ENCODE measurements at regions of chr19 and their contacts with region 1.

Region 1: DNA sequence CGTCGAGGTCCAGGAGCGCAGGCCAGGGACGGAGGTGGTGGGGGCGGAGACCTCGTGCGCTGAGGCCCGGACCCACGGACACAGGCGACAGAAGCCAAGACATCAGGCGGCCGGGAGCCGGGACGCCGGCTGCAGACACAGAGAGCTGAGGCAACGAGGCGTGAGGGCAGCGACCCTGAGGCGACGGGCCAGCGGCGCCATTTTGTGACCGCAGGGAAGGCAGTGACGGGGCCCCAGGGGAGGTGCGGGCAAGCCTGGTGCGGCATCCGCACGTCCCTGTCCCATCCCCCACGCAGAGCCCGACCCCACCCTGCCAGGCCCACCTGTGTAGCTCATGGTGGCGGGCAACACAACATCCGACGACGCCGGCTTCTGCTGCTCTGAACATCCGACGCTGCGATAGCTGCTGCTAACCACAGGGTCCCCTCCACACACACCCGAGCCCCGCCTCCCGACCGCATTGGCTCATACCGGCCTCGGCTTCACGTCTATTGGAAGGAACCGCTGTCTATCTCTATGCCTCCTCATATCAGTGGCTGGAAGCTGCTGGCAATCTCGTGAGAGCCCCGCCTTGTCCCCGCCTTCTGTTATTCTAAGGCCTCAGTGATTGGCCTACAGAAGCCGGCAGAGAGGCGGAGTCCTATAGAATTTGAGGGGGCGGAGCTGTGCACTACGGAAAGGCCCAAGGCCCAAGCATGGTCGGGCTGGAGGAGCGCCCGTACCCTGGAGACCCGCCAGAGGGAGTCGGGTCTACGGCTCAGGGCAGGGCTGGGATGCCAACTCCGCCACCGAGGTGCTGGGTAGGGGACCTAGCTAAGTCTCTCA is at the start of gene AKAP8L:
- DNase-seq: peak; percentile 97 to 100 (median 99)
- H3K4me3 ChIP-seq: peak within 1 kb of the TSS; percentile 77
- H3K4me3 Mint-ChIP-seq: peak within 1 kb of the TSS; percentile 94 to 100 (median 98)
- H3K27ac ChIP-seq: peak within 1 kb of the TSS; percentile 81
- H3K27ac Mint-ChIP-seq: peak within 1 kb of the TSS; percentile 87 to 99 (median 98)
- H3K4me1 ChIP-seq: peaks cover 41% of the 10 kb centered on the region
- H3K4me1 Mint-ChIP-seq: peaks cover 36 to 51% (median 48%) of the 10 kb centered on the region in 3 donors
- H3K27me3 ChIP-seq: no peaks in the 10 kb centered on the region
- H3K27me3 Mint-ChIP-seq: peaks cover 0 to 3% of the 10 kb centered on the region in 2 donors
- total RNA-seq, gene AKAP8L: 74.5 to 74.9 TPM

Region 2: DNA sequence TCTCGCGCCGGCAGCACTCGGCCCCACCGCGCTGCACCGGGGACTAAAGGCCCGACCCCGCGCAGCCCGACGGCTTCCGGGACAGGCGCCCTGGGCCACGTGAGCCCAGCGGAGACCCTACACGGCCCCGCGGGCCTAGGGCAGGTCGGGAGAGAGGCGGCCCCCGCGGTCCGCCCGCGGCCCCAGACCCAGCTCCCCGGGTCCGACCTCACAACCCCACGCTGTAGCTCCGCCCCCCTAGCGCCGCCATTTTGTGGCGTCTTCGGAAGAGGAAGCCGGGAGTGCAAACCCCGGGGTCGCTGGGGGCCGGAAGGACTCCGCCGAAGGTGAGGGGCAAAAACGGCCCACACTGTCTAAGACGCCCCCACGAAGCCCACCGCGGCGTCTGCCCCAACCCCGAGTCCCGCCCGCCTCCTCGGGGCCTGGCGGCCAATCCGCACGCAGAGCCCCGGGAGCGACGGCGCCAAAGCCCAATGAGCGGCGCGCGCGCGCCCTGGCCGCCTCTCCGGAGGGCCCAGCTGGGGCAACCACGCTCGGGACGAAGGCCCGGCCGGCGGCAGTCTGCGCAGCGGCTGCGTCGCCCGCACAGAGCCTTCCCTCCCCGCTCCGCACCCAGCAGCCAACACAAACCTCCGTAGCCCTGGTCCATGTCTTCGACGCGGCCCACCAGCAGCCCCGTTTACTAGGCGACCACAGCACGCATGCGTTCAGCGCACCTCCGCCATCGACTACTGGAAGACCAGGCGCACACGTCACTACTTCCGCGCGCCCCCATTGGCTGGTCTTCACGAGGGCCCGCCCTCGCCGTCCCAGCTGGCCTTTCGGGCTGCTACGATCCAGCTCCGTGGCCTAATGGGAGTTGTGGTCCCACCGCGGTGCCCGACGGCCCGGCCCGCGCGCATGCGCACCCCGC is 39.5 kb before region 1 on chr19 and contains the start of gene AKAP8:
- CTCF ChIA-PET with region 1: interaction called, 34 read pairs
- POLR2A ChIA-PET with region 1: interaction called, 61 read pairs
- DNase-seq: peak; percentile 96 to 99 (median 98)
- H3K4me3 ChIP-seq: peak within 1 kb of the TSS; percentile 100
- H3K4me3 Mint-ChIP-seq: peak within 1 kb of the TSS; percentile 92 to 100 (median 100)
- H3K27ac ChIP-seq: peak within 1 kb of the TSS; percentile 97
- H3K27ac Mint-ChIP-seq: peak within 1 kb of the TSS; percentile 86 to 100 (median 100)
- H3K4me1 ChIP-seq: peaks cover 28% of the 10 kb centered on the region
- H3K4me1 Mint-ChIP-seq: peaks cover 29 to 49% (median 40%) of the 10 kb centered on the region in 3 donors
- H3K27me3 ChIP-seq: no peaks in the 10 kb centered on the region
- H3K27me3 Mint-ChIP-seq: peaks cover 0 to 1% of the 10 kb centered on the region in 2 donors
- total RNA-seq, gene AKAP8: 48.6 to 59.8 TPM

Region 3: DNA sequence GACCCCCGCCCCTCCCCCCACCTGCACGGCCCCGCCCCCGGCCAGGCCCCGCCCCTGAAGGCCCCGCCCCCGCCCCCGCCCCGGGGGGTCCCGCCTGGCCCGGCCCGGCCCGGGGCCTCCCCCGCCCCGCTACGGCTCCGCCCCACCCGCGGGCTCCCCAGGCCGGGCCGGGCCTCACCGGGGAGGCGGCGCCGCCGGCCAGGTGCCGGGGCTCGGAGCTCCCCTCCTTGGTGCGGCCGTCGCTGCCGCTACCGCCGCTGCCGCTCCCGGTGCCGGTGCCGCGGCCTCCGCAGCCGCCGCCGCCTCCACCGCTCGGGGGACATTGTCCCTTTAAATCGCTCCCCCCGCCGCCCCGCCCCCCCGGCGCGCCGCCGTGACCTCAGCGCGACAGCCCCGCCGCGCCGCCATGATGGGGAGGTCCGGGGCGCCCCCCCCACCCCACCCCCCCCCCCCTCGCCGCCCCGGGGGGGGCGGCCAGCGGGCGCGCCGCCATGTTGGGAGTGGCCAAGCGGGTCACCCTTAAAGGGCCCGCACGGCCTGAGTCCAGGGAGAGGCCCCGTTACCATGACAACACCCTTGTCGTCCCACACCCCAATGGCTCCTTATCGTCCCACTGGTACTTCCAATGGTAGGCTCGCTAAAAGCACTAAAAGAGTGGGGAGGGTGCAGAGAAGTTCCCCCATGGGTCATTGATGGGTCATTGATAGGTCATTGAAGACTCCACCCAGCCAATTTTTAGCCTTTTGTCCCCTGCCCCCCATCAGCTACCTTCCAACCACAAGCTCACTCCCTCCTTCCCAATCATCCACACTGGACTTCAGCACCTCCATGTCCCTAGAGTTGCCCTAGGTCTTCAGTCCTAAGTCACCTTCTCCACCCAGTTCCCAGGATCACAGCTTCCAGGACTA is 31.1 kb after region 1 on chr19 and contains the start of gene WIZ:
- CTCF ChIA-PET with region 1: interaction called, 20 read pairs
- POLR2A ChIA-PET with region 1: interaction called, 6 read pairs
- DNase-seq: peak; percentile 76 to 89 (median 85)
- H3K4me3 ChIP-seq: peak within 1 kb of the TSS; percentile 23
- H3K4me3 Mint-ChIP-seq: peak within 1 kb of the TSS; percentile 79 to 94 (median 82)
- H3K27ac ChIP-seq: peak within 1 kb of the TSS; percentile 27
- H3K27ac Mint-ChIP-seq: peak within 1 kb of the TSS; percentile 90 to 98 (median 96)
- H3K4me1 ChIP-seq: peaks cover 6% of the 10 kb centered on the region
- H3K4me1 Mint-ChIP-seq: peaks cover 25 to 37% (median 28%) of the 10 kb centered on the region in 3 donors
- H3K27me3 ChIP-seq: no peaks in the 10 kb centered on the region
- H3K27me3 Mint-ChIP-seq: peaks cover 0 to 8% of the 10 kb centered on the region in 2 donors
- total RNA-seq, gene WIZ: 28.9 to 31.2 TPM

Region 4: GRCh38 chr19:15544283-15544682 is 125.5 kb after region 1 on chr19:
- CTCF ChIA-PET with region 1: interaction called, 183 read pairs
- POLR2A ChIA-PET with region 1: no interaction called
- DNase-seq: no peak
- H3K4me3 ChIP-seq: no peak overlapping the region
- H3K4me3 Mint-ChIP-seq: no peak overlapping the region
- H3K27ac ChIP-seq: no peak overlapping the region
- H3K27ac Mint-ChIP-seq: peak overlapping the region in 1 of 8 donors; percentile 38
- H3K4me1 ChIP-seq: no peaks in the 10 kb centered on the region
- H3K4me1 Mint-ChIP-seq: no peaks in the 10 kb centered on the region
- H3K27me3 ChIP-seq: no peaks in the 10 kb centered on the region
- H3K27me3 Mint-ChIP-seq: no peaks in the 10 kb centered on the region